ENCODE measurements at regions of chr9 and their contacts with region 1.

Region 1: DNA sequence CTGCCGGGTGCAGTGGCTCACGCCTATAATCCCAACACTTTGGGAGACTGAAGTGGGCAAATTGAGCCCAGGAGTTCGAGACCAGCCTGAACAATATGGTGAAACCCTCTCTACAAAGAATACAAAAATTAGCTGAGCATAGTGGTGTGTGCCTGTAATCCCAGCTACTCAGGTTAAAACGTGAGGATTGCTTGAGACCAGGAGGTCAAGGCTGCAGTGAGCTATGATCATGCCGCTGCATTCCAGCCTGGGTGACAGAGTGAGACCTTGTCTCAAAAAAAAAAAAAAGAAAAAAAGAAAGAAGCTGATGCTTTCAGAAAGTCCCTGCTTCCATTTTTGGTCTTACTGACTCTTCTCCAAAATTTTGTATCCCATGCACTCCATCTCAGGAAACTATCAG is 31.3 kb downstream of the SNAPC3 start:
- ATAC-seq: no peak
- H3K4me3 ChIP-seq: no peak overlapping the region
- H3K27ac ChIP-seq: no peak overlapping the region
- H3K4me1 ChIP-seq: no peaks in the 10 kb centered on the region

Region 2: GRCh38 chr9:15277400-15278090 is 176.4 kb before region 1 on chr9:
- in situ Hi-C with region 1: no loop called
- ATAC-seq: peak in 4 of 8 experiments; percentile 30 to 72 (median 60)
- H3K4me3 ChIP-seq: no peak overlapping the region
- H3K27ac ChIP-seq: no peak overlapping the region
- H3K4me1 ChIP-seq: no peaks in the 10 kb centered on the region

Region 3: GRCh38 chr9:15612962-15613361 is 159.0 kb after region 1 on chr9:
- in situ Hi-C with region 1: loop called in 1 of 9 experiments (anchors 10 kb)
- ATAC-seq: no peak
- H3K4me3 ChIP-seq: no peak overlapping the region
- H3K27ac ChIP-seq: no peak overlapping the region
- H3K4me1 ChIP-seq: no peaks in the 10 kb centered on the region